ENCODE measurements at regions of chr4 and their contacts with region 1.

Region 1: DNA sequence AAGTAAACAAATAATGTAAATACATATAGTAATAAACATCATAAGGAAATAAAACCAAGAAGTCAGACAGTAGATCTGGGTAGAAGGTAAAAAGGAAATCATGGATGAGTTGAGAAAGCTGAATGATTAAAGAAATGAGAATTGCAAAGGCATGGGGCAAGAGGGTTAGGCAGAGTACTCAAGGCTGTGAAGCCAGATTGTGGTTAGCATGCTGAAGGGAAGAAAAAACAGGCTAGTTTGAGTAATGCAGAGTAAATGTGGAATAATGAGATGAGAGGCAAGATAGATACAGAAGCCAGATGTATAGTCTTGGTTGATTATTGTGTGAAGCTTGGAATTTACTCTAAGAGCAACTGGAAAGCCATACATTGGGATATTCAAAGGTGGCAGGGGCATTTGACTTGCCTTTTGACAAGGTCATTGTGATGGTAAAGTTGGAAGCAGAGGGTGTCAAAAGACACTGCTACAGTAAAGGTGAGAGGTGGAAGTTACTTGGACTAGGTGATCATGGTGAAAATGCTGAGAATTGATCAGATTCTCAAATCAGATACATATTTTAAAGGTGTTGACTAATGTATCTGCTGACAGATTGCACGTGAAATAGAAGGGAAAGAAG is 307.0 kb downstream of the FSTL5 start:
- DNase-seq: no peak
- ATAC-seq: no peak
- H3K4me3 ChIP-seq: no peak overlapping the region
- H3K27ac ChIP-seq: no peak overlapping the region
- H3K4me1 ChIP-seq: no peaks in the 10 kb centered on the region
- H3K27me3 ChIP-seq: no peaks in the 10 kb centered on the region
- CTCF ChIP-seq: no peak
- EP300 ChIP-seq: no peak
- POLR2A ChIP-seq: no peak
- RAD21 ChIP-seq: no peak

Region 2: GRCh38 chr4:160592258-160592657 is 1264.6 kb before region 1 on chr4:
- CTCF ChIA-PET with region 1: no interaction called
- POLR2A ChIA-PET with region 1: no interaction called
- in situ Hi-C with region 1: no loop called
- intact Hi-C with region 1: no loop called
- DNase-seq: no peak
- ATAC-seq: no peak
- H3K4me3 ChIP-seq: no peak overlapping the region
- H3K27ac ChIP-seq: no peak overlapping the region
- H3K4me1 ChIP-seq: no peaks in the 10 kb centered on the region
- H3K27me3 ChIP-seq: no peaks in the 10 kb centered on the region; a peak in 1 of 5 replicates
- CTCF ChIP-seq: no peak
- EP300 ChIP-seq: no peak
- POLR2A ChIP-seq: no peak
- RAD21 ChIP-seq: no peak

Region 3: GRCh38 chr4:162909952-162910351 is 1053.1 kb after region 1 on chr4:
- CTCF ChIA-PET with region 1: no interaction called
- POLR2A ChIA-PET with region 1: no interaction called
- in situ Hi-C with region 1: no loop called
- intact Hi-C with region 1: loop called (anchors 5 kb)
- DNase-seq: no peak
- ATAC-seq: no peak
- H3K4me3 ChIP-seq: no peak overlapping the region
- H3K27ac ChIP-seq: no peak overlapping the region
- H3K4me1 ChIP-seq: no peaks in the 10 kb centered on the region
- H3K27me3 ChIP-seq: no peaks in the 10 kb centered on the region
- CTCF ChIP-seq: no peak
- EP300 ChIP-seq: no peak
- POLR2A ChIP-seq: no peak
- RAD21 ChIP-seq: no peak